ENCODE measurements at regions of chr19 and their contacts with region 1.

Region 1: GRCh38 chr19:13880059-13881043 is 3.4 kb downstream of the NANOS3 start:
- DNase-seq: peak; percentile 99
- ATAC-seq: peak; percentile 95

Region 2: DNA sequence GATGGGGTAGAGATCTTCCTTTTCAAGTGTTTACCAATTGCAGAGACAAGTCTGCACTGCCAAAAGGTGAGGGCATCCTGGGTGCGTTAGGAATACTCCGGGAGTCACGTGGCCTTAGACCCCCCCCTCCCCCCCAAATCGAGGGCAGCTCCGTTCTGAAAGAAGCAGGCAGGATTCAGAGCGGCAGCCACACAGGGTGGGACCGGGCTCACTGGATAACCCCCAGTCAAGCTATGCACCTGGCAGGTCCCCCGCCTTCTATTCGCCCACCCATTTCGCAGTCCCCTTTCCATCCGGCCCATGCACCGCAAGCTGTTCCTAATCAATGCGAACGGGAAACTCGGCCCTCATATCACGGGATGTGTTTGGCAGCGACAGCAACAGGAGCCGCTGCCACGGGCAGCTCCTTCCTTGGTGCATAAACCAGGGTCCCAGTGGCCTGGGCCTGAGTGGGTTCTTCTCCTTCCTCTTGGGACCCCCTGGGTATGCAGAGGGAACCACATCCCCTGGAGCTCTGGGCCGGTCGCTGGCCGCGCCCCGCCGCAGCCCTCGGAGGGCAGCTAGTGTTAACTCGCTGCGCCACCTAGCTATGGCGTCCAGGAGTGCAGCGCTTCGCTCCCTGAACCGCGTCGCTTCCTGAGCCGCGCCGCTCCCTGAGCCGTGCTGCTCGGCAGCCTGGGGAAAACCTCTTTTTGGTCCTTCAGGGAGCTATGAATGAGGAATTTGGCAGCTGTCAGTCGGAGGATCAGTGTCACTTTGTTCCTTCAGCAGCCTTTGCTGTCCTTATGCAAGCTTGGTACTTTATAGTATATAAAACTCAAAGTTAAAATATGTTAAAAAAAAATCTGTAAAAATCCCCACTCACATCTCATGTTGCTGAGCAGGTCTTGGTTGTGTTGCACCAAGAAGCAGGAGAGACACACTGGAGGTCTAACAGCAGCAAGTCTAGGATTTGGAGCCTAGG is 819.1 kb before region 1 on chr19:
- intact Hi-C with region 1: no loop called
- DNase-seq: peak; percentile 94
- ATAC-seq: peak; percentile 87

Region 3: GRCh38 chr19:14059093-14059480 is 178.7 kb after region 1 on chr19:
- intact Hi-C with region 1: loop called (anchors 5 kb)
- DNase-seq: peak; percentile 67
- ATAC-seq: no peak

Region 4: DNA sequence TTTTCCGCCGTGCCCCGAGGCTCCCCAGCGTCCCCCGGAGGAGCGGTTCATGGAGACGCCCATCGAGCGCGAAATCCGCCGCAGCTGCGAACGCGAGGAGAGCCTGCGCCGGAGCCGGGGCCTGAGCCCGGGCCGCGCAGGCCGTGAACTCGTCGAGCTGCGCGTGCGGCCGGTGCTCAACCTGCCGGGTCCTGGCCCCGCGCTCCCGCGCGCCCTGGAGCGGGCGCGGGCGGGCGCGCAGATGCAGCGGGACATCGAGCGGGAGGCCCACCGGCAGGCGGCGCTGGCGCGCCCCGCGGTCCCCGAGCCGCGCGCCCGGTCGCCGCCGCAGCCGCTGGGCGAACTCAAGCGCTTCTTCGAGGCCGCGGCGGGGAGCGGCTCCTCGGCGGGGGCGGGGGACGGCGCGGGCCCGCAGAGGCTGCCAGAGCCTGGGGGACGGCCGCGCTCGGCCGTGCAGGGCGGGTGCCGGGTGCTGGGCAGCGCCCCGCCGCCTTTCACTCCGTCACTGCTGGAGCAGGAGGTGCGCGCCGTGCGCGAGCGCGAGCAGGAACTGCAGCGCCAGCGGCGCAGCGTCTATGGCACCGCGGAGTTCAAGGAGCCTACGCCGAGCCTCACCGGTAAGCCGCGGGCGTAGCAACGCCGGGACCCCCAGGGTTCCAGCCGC is 193.0 kb after region 1 on chr19:
- intact Hi-C with region 1: no loop called
- DNase-seq: peak; percentile 83
- ATAC-seq: peak; percentile 58

Measured in sciatic nerve (tissue), 2 donors.